ENCODE measurements at regions of chr11 and their contacts with region 1.

Region 1: GRCh38 chr11:100575870-100576705 is 111.0 kb upstream of the ARHGAP42 start:
- DNase-seq: peak; percentile 32
- CTCF ChIP-seq: peak; percentile 69

Region 2: DNA sequence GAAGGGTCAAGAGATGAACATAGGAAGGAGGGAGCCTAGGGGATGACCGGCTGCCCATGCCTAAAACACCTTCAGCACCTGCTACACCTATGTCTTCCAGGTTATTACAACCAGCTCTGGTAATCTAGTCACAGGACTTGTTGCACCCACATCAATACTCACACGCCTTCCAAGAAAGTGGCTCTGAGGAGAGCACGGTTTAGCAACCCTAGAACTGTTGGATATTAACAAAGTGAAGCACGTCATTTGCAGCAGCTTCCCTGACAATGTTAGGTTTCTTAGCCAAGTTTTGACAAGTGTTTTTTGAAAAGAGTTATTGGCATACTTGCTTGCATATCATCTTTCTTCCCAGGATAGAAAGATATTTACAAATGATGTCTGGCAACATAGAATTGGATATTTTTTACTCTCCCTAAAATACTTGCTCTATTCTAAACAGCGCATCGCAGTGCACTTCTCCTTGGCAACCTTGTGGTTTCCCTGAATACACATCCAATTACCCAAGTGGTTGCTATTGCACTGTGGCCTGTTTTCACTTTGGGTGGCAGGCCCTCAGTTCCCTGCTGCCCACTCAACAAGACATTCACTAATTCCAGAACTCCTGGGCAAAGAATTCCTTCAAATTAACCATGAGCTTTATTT is 16.7 kb after region 1 on chr11:
- CTCF ChIA-PET with region 1: interaction called, 13 read pairs
- POLR2A ChIA-PET with region 1: no interaction called
- DNase-seq: no peak
- CTCF ChIP-seq: no peak

Region 3: DNA sequence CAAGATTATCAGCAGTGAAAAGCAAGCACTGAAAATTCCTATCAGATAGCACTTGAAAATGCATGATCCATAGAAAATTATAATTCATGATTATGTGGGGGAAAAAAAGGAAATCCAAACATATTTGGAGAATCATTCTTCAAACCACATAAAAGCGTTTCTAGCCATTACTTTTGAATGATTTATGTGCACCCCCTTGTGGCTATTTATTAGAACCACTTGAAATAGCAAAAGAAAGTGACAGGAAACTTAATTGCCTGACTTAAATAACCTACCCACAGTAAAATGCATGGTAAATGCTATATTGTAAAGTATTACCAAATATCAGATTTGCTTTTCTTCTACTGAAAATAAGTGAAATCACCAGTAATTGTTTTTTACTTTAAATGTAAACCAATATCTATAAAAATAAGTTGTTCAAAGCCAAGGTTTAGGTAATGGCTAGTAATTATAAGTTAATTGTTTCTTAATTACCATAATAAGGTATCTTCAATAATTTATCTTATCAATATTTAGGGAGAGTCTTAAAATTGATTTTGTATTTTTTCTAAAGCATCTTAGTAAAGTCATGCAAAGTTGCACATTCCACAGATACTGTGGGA is 279.5 kb after region 1 on chr11:
- CTCF ChIA-PET with region 1: interaction called, 13 read pairs
- POLR2A ChIA-PET with region 1: no interaction called
- DNase-seq: no peak
- CTCF ChIP-seq: peak; percentile 45

Region 4: DNA sequence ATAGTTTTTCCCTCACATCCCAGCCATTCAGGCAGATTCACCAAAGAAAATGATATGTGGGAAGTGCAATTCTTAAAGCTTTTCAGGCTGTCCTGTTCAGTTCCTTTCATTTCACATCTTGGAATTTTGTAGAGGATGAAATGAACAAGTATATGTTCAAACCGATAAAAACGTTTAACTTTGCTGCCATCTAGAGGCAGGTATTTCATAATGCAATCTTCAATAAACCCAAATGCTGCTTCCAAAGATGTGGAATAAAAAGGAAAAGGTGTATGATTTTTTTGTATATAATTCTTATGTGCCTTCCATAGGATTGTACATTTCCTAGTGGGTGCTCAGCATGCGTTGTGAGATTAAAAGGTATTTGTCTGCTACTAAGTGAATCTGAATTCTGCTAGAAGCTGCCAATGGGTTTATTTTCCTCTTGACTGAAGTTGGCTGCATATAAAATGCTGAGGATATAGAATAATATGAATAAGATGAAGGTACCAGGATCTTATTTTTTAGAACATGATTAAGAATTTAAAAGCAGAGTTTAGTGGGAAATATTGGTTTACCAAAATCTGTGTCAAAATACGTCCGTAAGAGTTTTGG is 354.2 kb after region 1 on chr11:
- CTCF ChIA-PET with region 1: interaction called, 15 read pairs
- POLR2A ChIA-PET with region 1: no interaction called
- DNase-seq: peak; percentile 7
- CTCF ChIP-seq: peak; percentile 51